Cardiac septum (tissue), 1 donor: ENCODE measurements at regions of chr16 and their contacts with region 1.

Region 1: GRCh38 chr16:4253394-4254150 is 11.7 kb upstream of the SRL start:
- DNase-seq: peak; percentile 100

Region 2: GRCh38 chr16:3530371-3530914 is 723.1 kb before region 1 on chr16:
- intact Hi-C with region 1: no loop called
- DNase-seq: no peak

Region 3: DNA sequence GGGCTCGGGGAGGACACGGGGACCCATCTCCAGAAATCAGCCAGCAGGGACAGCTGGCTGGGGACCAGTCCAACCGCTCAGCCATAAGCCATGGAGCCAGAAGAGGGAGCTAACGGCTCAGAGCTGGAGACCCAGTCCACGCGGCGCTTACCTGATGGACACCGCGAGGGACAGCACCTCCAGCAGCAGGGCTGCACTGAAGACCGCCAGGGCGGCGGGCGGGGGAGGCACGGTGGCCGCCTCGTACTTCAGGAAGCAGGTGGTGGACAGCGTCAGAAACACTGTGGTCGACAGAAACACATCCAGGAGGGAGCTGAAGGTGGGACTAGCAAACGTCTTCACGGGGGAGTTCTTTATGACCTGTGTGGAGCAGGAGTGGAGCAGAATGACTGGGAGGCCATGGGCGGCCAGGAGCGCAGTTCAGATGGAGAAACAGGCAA is 270.5 kb before region 1 on chr16:
- intact Hi-C with region 1: loop called (anchors 2 kb)
- DNase-seq: no peak

Region 4: DNA sequence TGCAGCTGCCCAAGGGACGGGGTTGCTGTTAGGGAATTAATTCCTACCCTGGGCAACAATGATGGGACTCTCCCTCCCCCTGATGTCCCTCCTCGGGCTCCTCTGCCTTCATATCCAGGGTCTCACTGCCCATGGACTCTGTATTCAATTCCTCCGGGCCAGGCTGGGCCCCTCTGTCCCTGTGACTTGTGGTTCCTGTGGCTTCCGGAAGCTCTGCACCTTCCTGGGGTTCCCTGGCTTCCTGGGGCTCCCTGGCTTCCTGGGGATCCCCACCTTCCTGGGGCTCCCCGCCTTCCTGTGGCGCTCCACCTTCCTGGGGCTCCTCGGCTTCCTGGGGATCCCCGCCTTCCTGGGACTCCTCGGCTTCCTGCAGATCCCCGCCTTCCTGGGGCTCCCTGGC is 46.9 kb before region 1 on chr16:
- intact Hi-C with region 1: loop called (anchors 1 kb)
- DNase-seq: no peak